MCF 10A (cell line): ENCODE measurements at regions of chr7 and their contacts with region 1.

Region 1: GRCh38 chr7:131945313-131945911 is 389.0 kb upstream of the PODXL start:
- DNase-seq: peak; percentile 44
- H3K4me3 Mint-ChIP-seq: no peak overlapping the region
- H3K27ac Mint-ChIP-seq: no peak overlapping the region
- H3K4me1 Mint-ChIP-seq: peaks cover 5% of the 10 kb centered on the region
- H3K27me3 Mint-ChIP-seq: peaks cover 19% of the 10 kb centered on the region
- CTCF ChIP-seq: peak; percentile 93

Region 2: DNA sequence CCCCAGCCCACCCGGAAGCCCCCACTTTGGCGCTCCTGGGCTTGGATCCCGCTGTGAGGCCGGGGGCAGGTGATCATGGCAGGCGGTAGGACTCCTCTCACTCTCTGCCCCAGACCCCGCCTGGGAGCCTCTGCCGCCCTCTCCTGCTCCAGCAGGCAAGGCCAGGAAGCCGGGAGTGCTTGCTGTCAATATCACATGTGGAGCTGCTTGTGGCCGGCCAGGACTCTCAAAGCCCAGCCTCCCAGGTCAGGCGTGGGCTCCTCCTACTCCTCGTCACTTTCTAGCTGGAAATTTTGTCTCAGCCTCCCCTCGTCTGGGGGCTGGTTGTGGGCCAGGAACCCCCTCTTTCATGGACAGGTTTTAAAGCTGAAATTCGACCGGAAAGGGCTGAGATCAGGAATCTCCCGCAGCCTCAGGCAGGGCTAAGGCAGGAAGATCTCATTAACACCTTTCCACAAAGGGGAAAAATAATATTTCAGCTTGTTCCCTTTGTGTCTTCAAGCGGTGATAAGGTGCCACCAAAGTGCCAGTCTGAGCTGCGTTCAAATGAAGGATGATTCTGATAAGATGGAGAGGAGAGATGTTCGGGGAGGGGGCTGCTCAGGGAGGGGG is 115.4 kb before region 1 on chr7:
- CTCF ChIA-PET with region 1: no interaction called
- POLR2A ChIA-PET with region 1: no interaction called
- intact Hi-C with region 1: no loop called
- DNase-seq: no peak
- H3K4me3 Mint-ChIP-seq: no peak overlapping the region
- H3K27ac Mint-ChIP-seq: no peak overlapping the region
- H3K4me1 Mint-ChIP-seq: no peaks in the 10 kb centered on the region
- H3K27me3 Mint-ChIP-seq: no peaks in the 10 kb centered on the region
- CTCF ChIP-seq: no peak

Region 3: GRCh38 chr7:132049462-132050304 is 104.3 kb after region 1 on chr7:
- CTCF ChIA-PET with region 1: interaction called, 4 read pairs
- POLR2A ChIA-PET with region 1: no interaction called
- intact Hi-C with region 1: loop called (anchors 5 kb)
- DNase-seq: peak; percentile 54
- H3K4me3 Mint-ChIP-seq: no peak overlapping the region
- H3K27ac Mint-ChIP-seq: no peak overlapping the region
- H3K4me1 Mint-ChIP-seq: no peaks in the 10 kb centered on the region
- H3K27me3 Mint-ChIP-seq: peaks cover 23% of the 10 kb centered on the region
- CTCF ChIP-seq: peak; percentile 48

Region 4: GRCh38 chr7:132145466-132145865 is 200.1 kb after region 1 on chr7:
- CTCF ChIA-PET with region 1: interaction called, 8 read pairs
- POLR2A ChIA-PET with region 1: no interaction called
- intact Hi-C with region 1: loop called (anchors 1 kb)
- DNase-seq: peak; percentile 90
- H3K4me3 Mint-ChIP-seq: no peak overlapping the region
- H3K27ac Mint-ChIP-seq: no peak overlapping the region
- H3K4me1 Mint-ChIP-seq: peaks cover 6% of the 10 kb centered on the region
- H3K27me3 Mint-ChIP-seq: peaks cover under 1% of the 10 kb centered on the region
- CTCF ChIP-seq: peak; percentile 13

Region 5: DNA sequence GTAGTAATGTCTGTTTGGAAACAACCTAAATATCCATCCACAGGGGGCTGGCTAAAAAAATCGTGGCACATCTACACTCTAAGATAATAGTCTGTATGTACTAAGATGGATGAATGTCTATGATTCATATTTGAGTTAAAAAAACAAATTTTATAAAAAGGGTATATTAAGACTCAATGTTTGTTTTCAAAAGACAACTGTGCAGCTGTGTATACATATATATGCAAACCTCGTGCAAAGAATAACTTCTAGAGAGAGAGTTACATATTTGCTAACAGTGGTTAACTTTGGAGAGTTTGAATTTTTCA is 307.3 kb after region 1 on chr7:
- CTCF ChIA-PET with region 1: interaction called, 8 read pairs
- POLR2A ChIA-PET with region 1: no interaction called
- intact Hi-C with region 1: loop called (anchors 1 kb)
- DNase-seq: no peak
- H3K4me3 Mint-ChIP-seq: no peak overlapping the region
- H3K27ac Mint-ChIP-seq: no peak overlapping the region
- H3K4me1 Mint-ChIP-seq: no peaks in the 10 kb centered on the region
- H3K27me3 Mint-ChIP-seq: no peaks in the 10 kb centered on the region
- CTCF ChIP-seq: no peak